SK-N-SH (cell line): ENCODE measurements at regions of chr12 and their contacts with region 1.

Region 1: GRCh38 chr12:59113831-59114615 is 193.7 kb upstream of the LRIG3 start:
- DNase-seq: peak; percentile 42
- H3K4me3 ChIP-seq: peak overlapping the region in 1 of 2 experiments; percentile 47; a peak in 1 of 4 replicates
- H3K27ac ChIP-seq: no peak overlapping the region
- H3K4me1 ChIP-seq: no peaks in the 10 kb centered on the region; a peak in 1 of 4 replicates
- H3K27me3 ChIP-seq: peaks cover 4% of the 10 kb centered on the region; the same call in 1 of the 2 replicates
- CTCF ChIP-seq: peak; percentile 86
- EP300 ChIP-seq: no peak
- RAD21 ChIP-seq: peak; percentile 83

Region 2: GRCh38 chr12:58950739-58951100 is 163.3 kb before region 1 on chr12:
- CTCF ChIA-PET with region 1: no interaction called
- POLR2A ChIA-PET with region 1: no interaction called
- DNase-seq: no peak
- H3K4me3 ChIP-seq: no peak overlapping the region
- H3K27ac ChIP-seq: no peak overlapping the region
- H3K4me1 ChIP-seq: no peaks in the 10 kb centered on the region
- H3K27me3 ChIP-seq: no peaks in the 10 kb centered on the region
- CTCF ChIP-seq: no peak
- EP300 ChIP-seq: no peak
- RAD21 ChIP-seq: no peak

Region 3: DNA sequence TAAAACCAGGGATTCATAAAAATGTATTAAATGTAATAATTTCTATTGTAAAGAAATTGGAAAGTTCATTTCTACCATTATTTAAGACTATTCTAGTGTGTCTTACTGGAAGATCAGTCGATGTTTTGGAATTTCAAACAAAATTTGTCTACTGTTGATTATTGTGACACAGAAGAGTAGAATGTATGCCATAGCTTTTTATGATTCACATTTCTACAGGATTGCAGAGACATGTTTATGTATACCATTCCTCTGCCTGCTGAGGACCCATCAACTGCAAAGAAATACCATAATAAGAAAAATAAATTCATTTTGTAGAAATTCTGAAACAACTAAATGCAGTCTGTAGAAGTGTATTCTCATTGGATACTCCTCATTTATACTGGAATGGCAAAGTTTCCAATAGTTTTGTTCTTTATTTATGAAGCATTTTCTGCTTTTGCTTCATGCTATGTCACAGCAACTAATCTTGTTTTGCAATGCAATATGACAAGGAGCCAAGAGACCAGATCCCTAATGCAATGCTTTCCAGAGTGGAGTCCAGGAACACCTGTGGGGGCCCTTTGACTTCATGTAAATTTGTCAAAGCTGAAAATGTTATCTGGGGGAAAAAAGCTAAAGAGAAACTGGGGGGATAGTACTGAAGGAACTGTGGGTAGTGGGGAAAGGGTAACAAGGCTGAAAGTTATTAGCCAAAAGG is 20.8 kb before region 1 on chr12:
- CTCF ChIA-PET with region 1: interaction called, 18 read pairs
- POLR2A ChIA-PET with region 1: no interaction called
- DNase-seq: no peak
- H3K4me3 ChIP-seq: no peak overlapping the region
- H3K27ac ChIP-seq: no peak overlapping the region
- H3K4me1 ChIP-seq: no peaks in the 10 kb centered on the region
- H3K27me3 ChIP-seq: no peaks in the 10 kb centered on the region
- CTCF ChIP-seq: no peak
- EP300 ChIP-seq: no peak
- RAD21 ChIP-seq: no peak

Region 4: GRCh38 chr12:59100585-59100984 is 13.4 kb before region 1 on chr12:
- CTCF ChIA-PET with region 1: interaction called, 13 read pairs
- POLR2A ChIA-PET with region 1: no interaction called
- DNase-seq: no peak
- H3K4me3 ChIP-seq: no peak overlapping the region
- H3K27ac ChIP-seq: no peak overlapping the region
- H3K4me1 ChIP-seq: no peaks in the 10 kb centered on the region
- H3K27me3 ChIP-seq: no peaks in the 10 kb centered on the region
- CTCF ChIP-seq: no peak
- EP300 ChIP-seq: no peak
- RAD21 ChIP-seq: no peak

Region 5: DNA sequence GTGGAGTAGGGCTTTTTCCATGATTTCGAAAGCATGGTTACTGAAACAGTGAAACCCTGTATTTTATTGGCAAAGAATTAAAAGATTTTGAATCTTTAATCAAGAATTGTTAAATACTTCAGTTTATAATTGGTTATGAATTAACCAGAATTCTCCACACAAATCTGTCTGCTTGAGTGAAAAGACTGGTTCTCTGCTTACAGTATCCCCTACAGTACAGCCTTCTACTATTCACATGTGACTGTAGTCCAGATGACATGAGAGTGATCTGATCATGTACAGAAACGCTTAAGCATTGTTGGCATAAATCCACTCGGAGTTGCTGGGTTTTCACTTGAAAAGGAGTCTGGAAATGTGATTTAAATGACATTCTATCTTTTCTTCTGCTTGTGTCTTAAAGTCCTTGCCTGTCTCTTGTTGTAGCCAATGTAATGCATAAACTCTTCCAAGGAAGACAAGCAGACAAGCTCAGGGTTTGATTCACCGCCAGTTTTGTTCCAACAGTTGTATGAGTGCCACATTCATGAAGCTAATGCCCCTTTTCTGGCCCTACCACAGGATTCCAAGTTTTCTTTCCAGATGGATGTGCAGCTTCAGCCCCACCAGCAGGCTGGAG is 28.3 kb after region 1 on chr12:
- CTCF ChIA-PET with region 1: interaction called, 16 read pairs
- POLR2A ChIA-PET with region 1: no interaction called
- DNase-seq: no peak
- H3K4me3 ChIP-seq: no peak overlapping the region
- H3K27ac ChIP-seq: no peak overlapping the region
- H3K4me1 ChIP-seq: no peaks in the 10 kb centered on the region
- H3K27me3 ChIP-seq: no peaks in the 10 kb centered on the region
- CTCF ChIP-seq: no peak
- EP300 ChIP-seq: no peak
- RAD21 ChIP-seq: no peak

Region 6: DNA sequence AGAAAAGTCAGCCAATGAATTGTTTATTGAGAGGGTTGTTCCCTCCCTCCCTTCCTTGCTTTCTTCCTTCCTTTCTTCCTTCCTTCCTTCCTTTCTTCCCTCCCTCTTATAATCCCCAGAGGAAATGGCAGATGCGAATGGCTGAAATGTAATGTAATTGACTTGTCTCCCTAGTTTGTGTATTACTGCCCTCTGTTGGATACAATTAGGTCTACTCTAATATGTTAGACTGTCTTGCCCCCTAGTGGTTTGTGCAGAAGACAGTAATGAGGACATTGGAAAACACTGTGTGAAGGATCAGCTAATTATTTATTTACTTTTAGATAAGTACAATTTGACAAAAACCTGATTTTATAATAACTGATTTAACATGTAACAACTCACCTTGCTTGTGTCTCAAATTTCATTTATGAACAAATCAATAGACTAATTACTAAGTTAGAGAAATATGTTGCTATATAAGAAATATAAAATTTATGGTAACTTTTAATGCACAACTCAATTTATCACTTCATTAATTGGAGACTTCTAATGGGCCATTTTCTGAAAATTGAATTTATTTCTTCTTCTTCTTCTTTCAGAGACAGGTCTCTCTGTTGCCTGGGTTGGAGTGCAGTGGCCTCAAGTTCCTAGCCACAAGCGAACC is 36.1 kb after region 1 on chr12:
- CTCF ChIA-PET with region 1: interaction called, 89 read pairs
- POLR2A ChIA-PET with region 1: no interaction called
- DNase-seq: peak; percentile 31
- H3K4me3 ChIP-seq: no peak overlapping the region; a peak in 1 of 4 replicates
- H3K27ac ChIP-seq: no peak overlapping the region
- H3K4me1 ChIP-seq: no peaks in the 10 kb centered on the region
- H3K27me3 ChIP-seq: no peaks in the 10 kb centered on the region; the same call in 1 of the 2 replicates
- CTCF ChIP-seq: peak; percentile 99
- EP300 ChIP-seq: no peak
- RAD21 ChIP-seq: peak; percentile 94

Region 7: GRCh38 chr12:59158066-59158465 is 44.0 kb after region 1 on chr12:
- CTCF ChIA-PET with region 1: interaction called, 89 read pairs
- POLR2A ChIA-PET with region 1: no interaction called
- DNase-seq: no peak
- H3K4me3 ChIP-seq: no peak overlapping the region
- H3K27ac ChIP-seq: no peak overlapping the region
- H3K4me1 ChIP-seq: no peaks in the 10 kb centered on the region
- H3K27me3 ChIP-seq: peaks cover 16% of the 10 kb centered on the region
- CTCF ChIP-seq: no peak
- EP300 ChIP-seq: no peak
- RAD21 ChIP-seq: no peak